ENCODE measurements at regions of chr3 and their contacts with region 1.

Region 1: DNA sequence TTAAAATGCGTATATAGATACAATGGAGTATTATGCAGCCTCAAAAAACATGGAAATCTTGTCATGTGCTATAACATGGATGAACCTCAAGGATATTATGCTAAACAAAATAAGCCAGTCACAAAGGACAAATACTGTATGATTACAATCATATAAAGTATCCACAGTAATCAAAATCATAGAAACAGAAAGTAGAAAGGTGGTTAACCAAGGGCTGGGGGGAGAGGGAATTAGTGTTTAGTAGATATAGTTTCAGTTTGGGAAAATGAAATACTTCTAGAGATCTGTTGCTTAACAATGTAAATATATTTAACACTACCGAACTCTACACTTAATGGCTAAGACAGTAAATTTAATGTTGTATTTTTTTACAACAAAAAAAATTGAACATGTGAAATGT is 9.0 kb downstream of the TOP2B start:
- DNase-seq: no peak
- CTCF ChIP-seq: no peak

Region 2: GRCh38 chr3:25856902-25857518 is 201.4 kb after region 1 on chr3:
- in situ Hi-C with region 1: loop called (anchors 10 kb)
- DNase-seq: peak; percentile 72
- CTCF ChIP-seq: peak; percentile 77